Motor neuron (in vitro differentiated cells): ENCODE measurements at regions of chr7 and their contacts with region 1.

Region 1: DNA sequence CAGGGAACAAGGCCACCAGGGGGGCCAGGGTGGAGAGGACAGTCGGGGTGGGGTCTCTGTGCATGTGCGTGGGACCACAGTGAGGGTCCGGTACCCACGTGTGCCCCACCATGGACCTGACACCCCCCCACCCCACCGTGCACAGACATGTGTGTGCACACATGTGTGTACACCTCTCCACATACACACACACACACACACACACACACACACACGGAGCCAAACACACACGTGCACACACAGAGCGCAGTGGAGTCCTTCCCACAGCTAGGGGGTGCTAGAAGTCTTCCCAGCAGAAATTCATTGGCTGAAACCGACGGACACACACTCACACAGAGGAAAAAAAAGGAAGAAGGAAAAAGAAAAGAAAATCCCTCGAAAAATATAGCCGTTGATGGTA is 42.8 kb upstream of the GNA12 start:
- ATAC-seq: peak; percentile 79 to 98 (median 82)
- H3K4me3 ChIP-seq: no peak overlapping the region
- H3K27ac ChIP-seq: peak overlapping the region; percentile 18 to 46
- H3K4me1 ChIP-seq: peaks cover 20 to 37% of the 10 kb centered on the region in 2 donors

Region 2: GRCh38 chr7:3154912-3155494 is 268.1 kb after region 1 on chr7:
- in situ Hi-C with region 1: loop called in 2 of 9 experiments (anchors 25 kb)
- ATAC-seq: peak in 1 of 8 experiments; percentile 35
- H3K4me3 ChIP-seq: no peak overlapping the region
- H3K27ac ChIP-seq: no peak overlapping the region
- H3K4me1 ChIP-seq: peaks cover 3 to 4% of the 10 kb centered on the region in 2 donors

Region 3: DNA sequence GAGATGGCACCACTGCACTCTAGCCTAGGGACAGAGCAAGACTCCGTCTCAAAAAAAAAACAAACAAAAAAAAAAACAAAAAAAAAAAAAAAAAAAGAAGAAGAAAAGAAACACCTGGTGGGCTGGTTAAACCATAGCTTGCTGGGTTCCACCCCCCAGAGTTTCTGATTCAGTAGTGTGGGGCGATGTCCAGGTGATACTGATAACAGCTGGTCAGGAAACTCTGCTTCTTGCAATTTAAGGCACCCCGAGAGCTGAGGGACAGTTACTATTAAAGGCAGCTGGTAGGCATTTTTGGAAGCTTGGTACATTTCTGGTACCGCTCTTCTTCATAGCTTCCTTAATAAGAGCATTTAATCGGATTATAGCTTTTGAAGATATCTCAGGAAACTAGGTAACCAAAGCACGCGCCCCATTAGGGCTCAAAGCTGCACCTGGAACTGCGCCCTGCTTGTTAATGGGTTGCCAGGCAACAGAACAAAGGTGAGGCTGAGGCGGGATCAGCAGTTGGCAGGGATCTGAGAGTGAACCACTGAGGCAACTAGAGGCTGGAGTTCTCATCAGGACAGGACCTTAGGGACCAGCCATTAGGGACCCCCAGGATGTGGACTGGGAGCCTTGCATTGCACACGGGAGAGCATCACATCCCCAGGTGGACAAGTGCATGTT is 407.7 kb after region 1 on chr7:
- in situ Hi-C with region 1: loop called in 1 of 9 experiments (anchors 25 kb)
- ATAC-seq: no peak
- H3K4me3 ChIP-seq: no peak overlapping the region
- H3K27ac ChIP-seq: no peak overlapping the region
- H3K4me1 ChIP-seq: no peaks in the 10 kb centered on the region

Region 4: DNA sequence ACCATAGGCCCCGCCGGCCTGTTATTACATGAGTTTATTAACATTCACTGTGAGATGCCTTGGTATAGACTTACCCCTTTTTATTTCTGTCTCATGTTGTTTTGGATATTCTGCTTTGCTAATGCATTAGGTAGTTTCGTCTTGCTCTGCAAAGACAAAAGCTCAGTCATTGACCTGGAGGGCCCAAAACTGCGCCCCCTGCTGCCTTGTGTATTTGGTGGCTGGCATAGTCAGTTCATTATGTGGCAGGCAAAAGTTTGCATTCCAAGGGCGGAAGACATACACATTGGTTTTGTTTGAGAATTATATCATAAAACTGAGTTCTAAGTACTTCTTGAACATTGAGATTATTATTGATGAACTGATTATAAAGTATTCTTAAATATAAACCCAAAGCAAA is 786.6 kb after region 1 on chr7:
- in situ Hi-C with region 1: loop called in 1 of 9 experiments (anchors 25 kb)
- ATAC-seq: no peak
- H3K4me3 ChIP-seq: no peak overlapping the region
- H3K27ac ChIP-seq: no peak overlapping the region
- H3K4me1 ChIP-seq: no peaks in the 10 kb centered on the region